GM12878 (cell line): ENCODE measurements at regions of chr10 and their contacts with region 1.

Region 1: GRCh38 chr10:14598809-14599764 is 175.6 kb downstream of the FAM107B start:
- DNase-seq: no peak
- ATAC-seq: peak; percentile 1; the same call in 2 of the 3 replicates
- H3K4me3 ChIP-seq: no peak overlapping the region
- H3K27ac ChIP-seq: no peak overlapping the region
- H3K4me1 ChIP-seq: peaks cover 16% of the 10 kb centered on the region
- H3K27me3 ChIP-seq: no peaks in the 10 kb centered on the region
- CTCF ChIP-seq: no peak
- EP300 ChIP-seq: no peak
- POLR2A ChIP-seq: peak; percentile 37; the same call in 1 of the 2 replicates
- RAD21 ChIP-seq: no peak

Region 2: GRCh38 chr10:14588084-14588937 is 10.8 kb before region 1 on chr10:
- CTCF ChIA-PET with region 1: interaction called, 17 read pairs
- POLR2A ChIA-PET with region 1: interaction called, 5 read pairs
- RAD21 ChIA-PET with region 1: interaction called, 19 read pairs
- SMC1A ChIA-PET with region 1: interaction called, 19 read pairs
- in situ Hi-C with region 1: no loop called
- intact Hi-C with region 1: no loop called
- DNase-seq: no peak
- ATAC-seq: peak; percentile 72
- H3K4me3 ChIP-seq: no peak overlapping the region
- H3K27ac ChIP-seq: peak overlapping the region; percentile 64
- H3K4me1 ChIP-seq: peaks cover 56% of the 10 kb centered on the region
- H3K27me3 ChIP-seq: no peaks in the 10 kb centered on the region
- CTCF ChIP-seq: no peak
- EP300 ChIP-seq: peak; percentile 23 to 80; a peak in 3 of 4 replicates
- POLR2A ChIP-seq: no peak
- RAD21 ChIP-seq: no peak

Region 3: GRCh38 chr10:14889318-14889717 is 290.2 kb after region 1 on chr10:
- CTCF ChIA-PET with region 1: no interaction called
- POLR2A ChIA-PET with region 1: no interaction called
- RAD21 ChIA-PET with region 1: no interaction called
- SMC1A ChIA-PET with region 1: no interaction called
- in situ Hi-C with region 1: no loop called
- intact Hi-C with region 1: no loop called
- DNase-seq: no peak
- ATAC-seq: peak; percentile 71
- H3K4me3 ChIP-seq: no peak overlapping the region
- H3K27ac ChIP-seq: no peak overlapping the region
- H3K4me1 ChIP-seq: no peaks in the 10 kb centered on the region
- H3K27me3 ChIP-seq: no peaks in the 10 kb centered on the region
- CTCF ChIP-seq: peak; percentile 28 to 43 (median 39); a peak in 4 of 6 replicates
- EP300 ChIP-seq: no peak
- POLR2A ChIP-seq: no peak
- RAD21 ChIP-seq: peak; percentile 33